ENCODE measurements at regions of chr7 and their contacts with region 1.

Region 1: DNA sequence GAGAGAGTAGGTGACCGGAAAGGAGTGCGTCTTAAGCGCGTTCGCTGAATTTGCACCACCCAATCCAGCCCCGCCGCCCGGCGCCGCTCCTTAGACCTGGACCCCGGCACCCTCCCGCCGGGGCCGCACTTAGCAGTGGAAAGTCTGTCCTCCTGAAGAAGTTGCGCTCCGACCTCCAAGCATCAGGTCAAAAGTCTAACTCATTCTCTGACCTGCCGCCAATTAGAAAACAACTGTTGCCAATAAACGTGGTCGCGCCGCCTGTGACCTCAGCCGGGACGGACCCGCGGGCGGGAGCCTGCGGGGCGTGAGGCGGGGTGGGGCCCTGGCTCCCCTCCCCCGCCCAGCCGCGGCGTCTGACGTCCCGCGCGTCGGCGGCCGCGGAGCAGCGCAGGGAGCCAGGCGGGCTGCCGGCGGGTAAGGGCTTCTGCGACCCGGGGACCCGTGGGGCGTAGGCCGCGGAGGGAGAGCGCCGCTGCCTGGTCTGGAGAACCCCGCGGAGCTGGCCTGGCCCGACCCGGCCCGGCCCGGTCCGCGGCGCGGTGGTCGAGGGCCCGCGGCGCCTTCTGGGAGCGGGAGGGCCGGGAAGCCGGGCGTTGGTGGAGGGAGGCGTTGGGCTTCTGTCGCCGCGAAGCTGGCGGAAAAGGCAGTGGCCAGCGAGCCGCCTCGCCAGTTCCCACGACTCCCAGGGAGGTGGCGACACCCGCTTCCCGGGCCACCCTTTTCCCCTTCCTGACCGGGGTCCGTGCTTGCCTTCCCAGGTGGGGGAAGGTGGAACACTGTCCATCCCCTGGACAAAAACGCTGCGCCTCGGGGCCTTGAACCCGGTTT is at the start of gene BCAP29:
- DNase-seq: peak; percentile 77
- H3K4me3 ChIP-seq: peak within 1 kb of the TSS; percentile 67
- H3K27ac ChIP-seq: peak within 1 kb of the TSS; percentile 90
- H3K4me1 ChIP-seq: no peaks in the 10 kb centered on the region
- H3K27me3 ChIP-seq: no peaks in the 10 kb centered on the region
- CTCF ChIP-seq: no peak
- total RNA-seq, gene BCAP29: 63.1 to 71.4 TPM

Region 2: GRCh38 chr7:107080099-107080505 is 500.0 kb before region 1 on chr7:
- intact Hi-C with region 1: no loop called
- DNase-seq: no peak
- H3K4me3 ChIP-seq: no peak overlapping the region
- H3K27ac ChIP-seq: no peak overlapping the region
- H3K4me1 ChIP-seq: no peaks in the 10 kb centered on the region
- H3K27me3 ChIP-seq: no peaks in the 10 kb centered on the region
- CTCF ChIP-seq: no peak

Region 3: GRCh38 chr7:107462740-107463444 is 117.2 kb before region 1 on chr7:
- intact Hi-C with region 1: loop called (anchors 10 kb)
- DNase-seq: peak; percentile 34
- H3K4me3 ChIP-seq: no peak overlapping the region
- H3K27ac ChIP-seq: no peak overlapping the region
- H3K4me1 ChIP-seq: no peaks in the 10 kb centered on the region
- H3K27me3 ChIP-seq: no peaks in the 10 kb centered on the region
- CTCF ChIP-seq: peak; percentile 60

Measured in colonic mucosa (tissue), 4 donors.